ENCODE measurements at regions of chr19 and their contacts with region 1.

Region 1: GRCh38 chr19:11738746-11739620 is at the start of gene ZNF823:
- DNase-seq: peak; percentile 96 to 97
- ATAC-seq: peak; percentile 98 to 99 (median 99)
- H3K4me3 ChIP-seq: peak within 1 kb of the TSS; percentile 68
- H3K4me3 Mint-ChIP-seq: peak within 1 kb of the TSS; percentile 100
- H3K27ac ChIP-seq: no peak within 1 kb of the TSS
- H3K27ac Mint-ChIP-seq: peak within 1 kb of the TSS; percentile 87 to 95
- H3K4me1 ChIP-seq: peaks cover 19% of the 10 kb centered on the region
- H3K4me1 Mint-ChIP-seq: peaks cover 20 to 21% of the 10 kb centered on the region in 2 donors
- H3K27me3 ChIP-seq: no peaks in the 10 kb centered on the region
- H3K27me3 Mint-ChIP-seq: peaks cover 0 to 5% of the 10 kb centered on the region in 2 donors
- CTCF ChIP-seq: no peak
- total RNA-seq, gene ZNF823: 3.2 to 7.1 (median 5.2) TPM

Region 2: GRCh38 chr19:11766597-11767591 is 27.9 kb after region 1 on chr19 and contains the start of gene ZNF441:
- intact Hi-C with region 1: loop called (anchors 1 kb)
- DNase-seq: peak; percentile 89 to 95
- ATAC-seq: peak; percentile 92 to 97 (median 96)
- H3K4me3 ChIP-seq: peak within 1 kb of the TSS; percentile 65
- H3K4me3 Mint-ChIP-seq: peak within 1 kb of the TSS; percentile 98
- H3K27ac ChIP-seq: peak within 1 kb of the TSS; percentile 83
- H3K27ac Mint-ChIP-seq: peak within 1 kb of the TSS; percentile 91 to 98
- H3K4me1 ChIP-seq: peaks cover 19% of the 10 kb centered on the region
- H3K4me1 Mint-ChIP-seq: peaks cover 28 to 30% of the 10 kb centered on the region in 2 donors
- H3K27me3 ChIP-seq: no peaks in the 10 kb centered on the region
- H3K27me3 Mint-ChIP-seq: peaks cover 0 to 3% of the 10 kb centered on the region in 2 donors
- CTCF ChIP-seq: no peak
- total RNA-seq, gene ZNF441: 6.5 to 9.6 (median 7.1) TPM

Region 3: DNA sequence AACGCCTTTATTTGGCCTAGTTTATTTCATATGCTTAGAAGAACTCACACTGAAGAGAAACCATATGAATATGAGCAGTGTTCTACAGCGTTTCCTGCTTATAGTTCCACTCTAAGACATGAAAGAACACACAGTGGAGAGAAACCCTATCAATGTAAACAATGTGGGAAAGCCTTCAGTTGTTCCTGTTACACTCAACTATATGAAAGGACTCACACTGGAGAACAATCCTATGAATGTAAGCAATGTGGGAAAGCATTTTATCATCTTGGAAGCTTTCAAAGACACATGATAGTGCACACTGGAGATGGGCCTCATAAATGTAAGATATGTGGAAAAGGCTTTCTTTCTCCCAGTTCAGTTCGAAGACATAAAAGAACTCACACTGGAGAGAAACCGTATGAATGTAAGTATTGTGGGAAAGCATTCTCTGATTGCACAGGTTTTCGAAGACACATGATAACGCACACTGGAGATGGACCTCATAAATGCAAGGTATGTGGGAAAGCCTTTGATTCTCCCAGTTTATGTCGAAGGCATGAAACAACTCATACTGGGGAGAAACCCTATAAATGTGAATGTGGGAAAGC is 41.5 kb after region 1 on chr19:
- intact Hi-C with region 1: no loop called
- DNase-seq: no peak
- ATAC-seq: no peak
- H3K4me3 ChIP-seq: no peak overlapping the region
- H3K4me3 Mint-ChIP-seq: no peak overlapping the region
- H3K27ac ChIP-seq: no peak overlapping the region
- H3K27ac Mint-ChIP-seq: no peak overlapping the region
- H3K4me1 ChIP-seq: no peaks in the 10 kb centered on the region
- H3K4me1 Mint-ChIP-seq: no peaks in the 10 kb centered on the region
- H3K27me3 ChIP-seq: no peaks in the 10 kb centered on the region
- H3K27me3 Mint-ChIP-seq: no peaks in the 10 kb centered on the region
- CTCF ChIP-seq: no peak